ENCODE measurements at regions of chr3 and their contacts with region 1.

Region 1: GRCh38 chr3:16550676-16551341 is 37.3 kb upstream of the RFTN1 start:
- DNase-seq: peak in 7 of 10 donors; percentile 47 to 84 (median 58)

Region 2: DNA sequence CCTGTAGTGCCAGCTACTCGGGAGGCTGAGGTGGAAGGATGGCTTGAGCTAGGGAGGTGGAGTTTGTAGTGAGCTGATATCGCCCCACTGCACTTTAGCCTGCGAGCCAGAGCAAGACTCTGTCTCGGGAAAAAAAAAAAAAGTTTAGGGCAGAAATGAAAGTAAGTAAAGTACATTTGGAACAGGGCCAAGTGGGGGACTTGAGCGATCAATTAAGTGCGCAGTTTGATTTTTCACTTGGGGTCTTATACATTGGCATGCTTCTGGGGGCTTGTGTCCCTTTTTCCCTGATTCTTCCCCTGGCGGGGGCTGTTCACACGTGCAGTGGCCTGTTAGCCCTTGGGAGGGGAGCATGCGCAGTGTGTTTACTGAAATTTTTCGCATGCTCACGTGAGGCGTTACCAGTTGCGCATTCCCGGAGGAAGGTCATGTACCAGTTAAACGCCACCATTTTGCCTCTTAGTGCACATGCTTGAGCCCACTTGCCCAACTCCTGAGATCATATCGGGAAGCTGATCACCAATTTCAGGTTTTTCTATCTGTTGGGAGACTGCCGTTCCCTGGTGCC is 334.4 kb before region 1 on chr3:
- intact Hi-C with region 1: no loop called
- DNase-seq: no peak

Region 3: DNA sequence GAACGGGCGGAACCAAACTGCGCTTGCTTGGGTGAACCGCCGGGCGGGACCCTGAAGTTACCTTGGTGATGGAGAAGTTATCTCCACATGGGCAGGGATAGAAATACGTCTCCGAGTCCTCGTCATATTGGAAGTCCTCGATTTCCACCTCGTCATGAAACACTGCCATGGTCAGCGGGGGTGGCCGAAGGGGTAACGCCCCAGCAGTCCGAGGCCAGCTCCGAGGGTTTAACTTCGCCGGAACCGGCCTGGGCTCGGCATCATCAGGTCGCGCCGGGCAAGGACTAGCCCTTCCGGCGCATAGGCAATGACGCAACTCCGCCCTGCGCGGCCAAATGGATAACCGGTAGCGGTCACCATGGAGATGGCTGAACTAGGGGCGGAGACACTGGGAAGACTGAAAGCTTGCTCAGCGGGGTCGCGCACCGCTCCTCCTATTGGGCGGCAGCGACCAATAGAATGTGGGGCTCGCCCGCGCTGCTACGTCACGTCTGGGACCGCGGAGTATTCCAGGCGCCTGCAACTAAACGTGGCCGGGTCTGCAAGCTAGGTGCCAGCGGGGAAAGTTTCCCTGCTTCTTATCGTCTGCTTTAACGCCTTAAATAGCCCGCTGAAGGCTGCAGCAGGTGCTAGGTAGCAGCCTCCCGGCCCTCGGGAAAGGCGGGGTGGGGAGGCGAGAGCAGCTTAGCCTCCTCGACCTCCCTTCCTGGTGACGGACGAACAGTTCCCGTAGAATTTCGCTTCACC is 285.9 kb before region 1 on chr3 and contains the starts of genes DPH3 and OXNAD1:
- intact Hi-C with region 1: loop called (anchors 2 kb)
- DNase-seq: peak; percentile 97 to 100 (median 98)

Region 4: GRCh38 chr3:16290007-16290826 is 260.6 kb before region 1 on chr3:
- intact Hi-C with region 1: loop called (anchors 1 kb)
- DNase-seq: peak in 5 of 10 donors; percentile 39 to 65 (median 54)

Measured in posterior cingulate gyrus (tissue), 11 donors.